GM23248 (cell line): ENCODE measurements at regions of chr12 and their contacts with region 1.

Region 1: DNA sequence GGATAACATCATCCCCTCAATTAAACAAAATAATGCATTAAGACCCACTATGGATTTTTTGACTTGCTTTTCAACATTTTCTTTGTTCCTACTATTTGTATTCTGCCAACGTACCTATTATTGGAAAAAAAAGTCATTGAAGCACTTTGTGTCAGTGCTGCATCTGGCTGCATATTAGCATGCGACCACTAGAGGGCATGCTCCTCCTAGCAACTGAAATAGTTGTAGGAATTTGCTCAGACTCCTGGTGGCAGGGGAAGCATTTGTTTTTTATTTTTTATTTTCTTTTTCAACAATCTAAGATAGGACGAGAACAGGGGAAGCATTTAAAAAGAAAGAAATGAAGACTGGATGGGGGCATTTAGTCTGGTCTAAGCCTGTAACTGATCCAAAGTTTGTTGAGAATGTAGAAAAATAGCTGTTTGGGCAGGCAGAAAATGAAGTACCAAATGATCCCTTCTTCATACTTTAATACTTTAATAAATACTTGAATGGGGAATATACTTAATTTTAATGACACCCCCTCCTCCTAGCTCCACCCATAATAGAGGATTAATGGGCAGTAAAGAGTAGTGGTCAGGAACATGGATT is 14.5 kb upstream of the CLEC4A start:
- DNase-seq: peak; percentile 79
- H3K4me3 ChIP-seq: 0 out of 2 replicates have a peak overlapping the region, but pooled peaks have one; percentile 20
- H3K27ac ChIP-seq: no peak overlapping the region
- H3K4me1 ChIP-seq: no peaks in the 10 kb centered on the region
- H3K27me3 ChIP-seq: no peaks in the 10 kb centered on the region

Region 2: GRCh38 chr12:6965026-6965661 is 1143.8 kb before region 1 on chr12:
- in situ Hi-C with region 1: no loop called
- DNase-seq: peak; percentile 89
- H3K4me3 ChIP-seq: no peak overlapping the region
- H3K27ac ChIP-seq: peak overlapping the region; percentile 53
- H3K4me1 ChIP-seq: peaks cover 15% of the 10 kb centered on the region; the same call in 1 of the 2 replicates
- H3K27me3 ChIP-seq: no peaks in the 10 kb centered on the region

Region 3: DNA sequence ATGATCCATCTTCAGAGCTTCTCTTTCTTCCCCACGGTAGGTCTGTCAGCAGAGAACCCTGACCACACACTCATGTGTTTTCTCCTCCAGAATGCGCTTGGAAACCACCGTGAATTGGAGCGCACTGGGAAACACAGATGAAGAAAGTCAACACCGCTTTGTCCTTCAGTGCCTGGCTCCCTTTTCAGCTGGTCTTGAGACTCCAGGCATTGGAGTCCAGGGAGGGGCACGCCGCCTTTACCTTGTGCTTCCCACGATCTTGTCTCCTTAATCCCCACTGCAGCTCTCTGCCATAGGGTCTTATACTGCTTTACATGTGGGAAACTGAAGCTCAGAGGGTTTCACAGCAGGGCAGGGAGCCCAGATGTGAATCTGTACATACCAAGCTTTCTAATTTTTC is 117.5 kb after region 1 on chr12:
- in situ Hi-C with region 1: loop called (anchors 10 kb)
- DNase-seq: no peak
- H3K4me3 ChIP-seq: no peak overlapping the region
- H3K27ac ChIP-seq: no peak overlapping the region
- H3K4me1 ChIP-seq: no peaks in the 10 kb centered on the region
- H3K27me3 ChIP-seq: no peaks in the 10 kb centered on the region